GM12878 (cell line): ENCODE measurements at regions of chr2 and their contacts with region 1.

Region 1: DNA sequence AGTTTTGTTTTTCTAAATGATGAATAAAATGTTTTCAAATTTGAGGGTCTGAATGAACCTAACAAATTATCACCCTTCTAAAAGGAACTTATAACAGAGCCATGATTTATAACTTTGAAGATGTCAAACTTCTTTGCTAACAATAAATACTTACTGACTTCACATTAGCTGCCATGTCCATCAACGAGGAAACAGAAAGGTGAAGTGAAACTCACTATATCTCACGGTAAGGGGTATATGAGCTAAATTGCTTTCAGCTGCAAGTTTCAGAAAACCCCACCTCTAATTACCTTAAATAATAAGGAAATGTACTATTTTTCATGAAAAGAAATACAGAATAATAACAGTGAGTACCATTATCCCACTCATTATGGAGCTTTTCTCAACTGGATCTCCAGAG is 350.8 kb upstream of the NT5C1B start:
- DNase-seq: peak; percentile 17
- ATAC-seq: peak; percentile 95
- H3K4me3 ChIP-seq: no peak overlapping the region
- H3K27ac ChIP-seq: no peak overlapping the region
- H3K4me1 ChIP-seq: peaks cover 10% of the 10 kb centered on the region
- H3K27me3 ChIP-seq: no peaks in the 10 kb centered on the region
- CTCF ChIP-seq: no peak
- EP300 ChIP-seq: peak in 1 of 2 experiments; percentile 65; a peak in 2 of 4 replicates
- POLR2A ChIP-seq: no peak
- RAD21 ChIP-seq: no peak

Region 2: DNA sequence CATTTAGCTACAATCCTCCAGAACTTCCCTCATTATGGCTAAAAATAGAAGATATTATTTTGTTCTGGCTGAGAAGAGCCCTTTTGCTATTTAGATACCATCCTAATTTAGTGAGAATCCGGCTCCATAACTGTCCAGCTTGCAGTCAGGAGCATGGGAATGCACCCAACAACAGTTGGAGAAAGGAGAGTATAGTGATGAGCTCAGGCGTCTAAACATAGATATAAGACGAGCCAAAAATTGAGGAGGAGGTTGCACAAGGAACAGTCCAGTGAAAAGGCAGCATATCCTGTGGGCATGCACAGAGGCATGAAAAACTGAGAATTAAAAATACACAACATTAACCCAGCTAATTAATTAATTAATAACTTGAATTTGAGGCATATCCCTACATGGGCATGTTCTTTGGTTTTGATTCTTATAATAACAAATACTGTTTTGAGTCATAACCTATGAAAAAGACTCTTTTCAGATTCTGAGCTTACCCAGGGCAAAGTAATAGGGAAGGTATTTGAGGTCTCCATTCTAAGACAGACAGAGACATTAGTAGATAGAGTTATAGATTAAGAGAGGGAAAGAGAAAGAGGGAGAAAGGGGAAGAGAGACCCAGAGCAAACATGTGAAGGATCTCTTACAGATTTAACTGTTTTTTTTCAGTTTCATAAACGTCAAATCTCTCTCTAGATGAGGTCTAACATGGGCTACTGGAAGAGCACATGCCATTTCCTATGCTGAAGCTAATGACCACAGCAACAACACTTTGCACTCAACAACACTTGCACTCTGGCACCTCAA is 107.0 kb after region 1 on chr2:
- CTCF ChIA-PET with region 1: no interaction called
- POLR2A ChIA-PET with region 1: no interaction called
- RAD21 ChIA-PET with region 1: no interaction called
- SMC1A ChIA-PET with region 1: no interaction called
- in situ Hi-C with region 1: no loop called
- intact Hi-C with region 1: loop called (anchors 5 kb)
- DNase-seq: peak; percentile 31
- ATAC-seq: peak; percentile 95
- H3K4me3 ChIP-seq: no peak overlapping the region
- H3K27ac ChIP-seq: no peak overlapping the region
- H3K4me1 ChIP-seq: no peaks in the 10 kb centered on the region
- H3K27me3 ChIP-seq: no peaks in the 10 kb centered on the region
- CTCF ChIP-seq: no peak
- EP300 ChIP-seq: peak; percentile 75 to 78; a peak in 3 of 4 replicates
- POLR2A ChIP-seq: no peak
- RAD21 ChIP-seq: no peak